ENCODE measurements at regions of chr7 and their contacts with region 1.

Region 1: DNA sequence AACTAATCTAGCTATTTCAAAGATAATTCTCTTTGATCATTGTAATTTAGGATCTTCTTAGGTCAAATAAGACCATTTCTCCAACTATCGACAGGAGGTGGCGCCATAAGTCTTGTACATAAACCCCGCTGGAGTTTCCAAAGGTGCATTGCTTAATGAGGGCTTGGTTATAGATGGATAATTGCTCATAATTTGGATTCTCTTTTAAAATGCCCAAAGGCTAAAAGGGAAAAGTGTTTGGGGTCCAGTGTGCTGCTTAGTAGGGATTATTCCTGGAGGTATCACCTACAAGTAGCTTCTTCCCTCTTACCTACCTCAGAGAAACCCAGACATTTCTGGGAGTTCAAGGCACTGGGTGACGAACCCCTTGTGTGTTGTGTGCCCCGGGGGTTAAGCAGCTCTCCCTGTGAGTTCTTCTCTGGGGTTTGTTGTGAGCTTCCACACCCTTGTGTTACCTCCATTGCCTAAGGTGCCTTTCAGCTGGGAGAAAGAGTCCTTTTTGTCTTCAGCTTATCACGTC is 75.2 kb downstream of the PAXIP1 start:
- DNase-seq: peak; percentile 87
- H3K4me3 ChIP-seq: peak overlapping the region; percentile 55
- H3K27ac ChIP-seq: peak overlapping the region; percentile 91
- H3K4me1 ChIP-seq: no peaks in the 10 kb centered on the region
- H3K27me3 ChIP-seq: no peaks in the 10 kb centered on the region
- CTCF ChIP-seq: peak; percentile 51

Region 2: DNA sequence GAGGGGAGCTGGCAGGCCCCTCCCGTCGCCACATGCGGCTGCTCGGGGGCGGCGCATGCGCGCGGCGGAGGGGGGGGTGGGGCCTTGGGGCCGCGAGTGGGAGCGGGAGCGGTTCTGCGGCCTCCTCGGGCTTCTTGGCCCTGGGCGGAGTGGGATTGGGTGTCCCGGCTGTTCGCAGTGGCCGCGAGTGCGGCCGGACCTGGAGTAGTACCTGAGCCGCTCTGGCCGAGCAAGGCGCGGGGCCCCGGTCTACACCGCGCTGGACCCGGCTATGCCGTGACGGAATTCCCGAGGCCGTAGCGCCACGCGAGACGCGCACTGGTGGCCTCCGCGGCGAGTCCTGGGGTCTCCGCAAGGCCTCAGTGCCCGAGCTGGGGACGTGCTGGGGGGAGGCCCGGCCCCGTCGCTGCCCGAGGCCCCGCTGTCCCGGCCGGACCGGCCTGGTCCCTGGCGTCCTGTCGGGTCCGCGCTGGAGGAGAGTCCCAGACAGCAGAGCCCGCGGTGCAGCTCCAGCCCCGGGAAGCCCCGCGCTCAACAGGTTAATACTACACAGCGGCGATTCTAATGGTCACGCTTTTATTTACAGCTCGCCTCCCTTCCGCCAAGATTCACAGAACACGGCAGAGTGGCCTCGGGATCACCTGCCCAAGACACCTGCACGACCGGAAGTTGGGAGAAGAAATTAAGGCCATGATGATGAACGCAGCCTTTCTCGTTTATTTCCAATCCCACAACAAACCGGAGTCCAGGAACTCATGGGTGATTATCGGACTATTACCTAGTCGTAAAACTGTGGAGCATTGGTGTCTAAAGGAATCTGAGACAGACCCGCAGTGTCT is 75.9 kb after region 1 on chr7:
- intact Hi-C with region 1: loop called (anchors 5 kb)
- DNase-seq: peak; percentile 76
- H3K4me3 ChIP-seq: peak overlapping the region; percentile 66
- H3K27ac ChIP-seq: peak overlapping the region; percentile 69
- H3K4me1 ChIP-seq: no peaks in the 10 kb centered on the region
- H3K27me3 ChIP-seq: no peaks in the 10 kb centered on the region
- CTCF ChIP-seq: no peak

Region 3: DNA sequence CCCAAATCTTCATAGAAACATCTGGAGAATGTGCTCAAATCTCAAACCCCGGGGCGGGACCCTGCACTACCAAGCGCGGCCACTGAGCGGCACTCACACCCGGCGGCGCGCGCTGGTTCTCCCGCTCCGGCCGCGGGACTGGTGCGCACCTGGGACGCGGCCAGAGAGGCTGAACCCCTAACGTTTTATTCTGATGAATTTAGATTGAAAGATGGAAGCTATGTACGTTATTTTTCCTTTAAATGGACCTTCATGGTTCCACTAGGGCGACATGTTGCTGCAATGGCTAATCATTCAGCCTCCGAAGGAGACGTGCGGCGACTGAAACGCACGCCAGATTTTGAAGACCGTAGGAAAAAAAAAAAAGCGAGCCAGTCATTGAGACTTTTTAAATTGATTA is 263.0 kb after region 1 on chr7:
- intact Hi-C with region 1: loop called (anchors 5 kb)
- DNase-seq: peak; percentile 51
- H3K4me3 ChIP-seq: no peak overlapping the region
- H3K27ac ChIP-seq: no peak overlapping the region
- H3K4me1 ChIP-seq: no peaks in the 10 kb centered on the region
- H3K27me3 ChIP-seq: no peaks in the 10 kb centered on the region
- CTCF ChIP-seq: peak; percentile 70

Region 4: DNA sequence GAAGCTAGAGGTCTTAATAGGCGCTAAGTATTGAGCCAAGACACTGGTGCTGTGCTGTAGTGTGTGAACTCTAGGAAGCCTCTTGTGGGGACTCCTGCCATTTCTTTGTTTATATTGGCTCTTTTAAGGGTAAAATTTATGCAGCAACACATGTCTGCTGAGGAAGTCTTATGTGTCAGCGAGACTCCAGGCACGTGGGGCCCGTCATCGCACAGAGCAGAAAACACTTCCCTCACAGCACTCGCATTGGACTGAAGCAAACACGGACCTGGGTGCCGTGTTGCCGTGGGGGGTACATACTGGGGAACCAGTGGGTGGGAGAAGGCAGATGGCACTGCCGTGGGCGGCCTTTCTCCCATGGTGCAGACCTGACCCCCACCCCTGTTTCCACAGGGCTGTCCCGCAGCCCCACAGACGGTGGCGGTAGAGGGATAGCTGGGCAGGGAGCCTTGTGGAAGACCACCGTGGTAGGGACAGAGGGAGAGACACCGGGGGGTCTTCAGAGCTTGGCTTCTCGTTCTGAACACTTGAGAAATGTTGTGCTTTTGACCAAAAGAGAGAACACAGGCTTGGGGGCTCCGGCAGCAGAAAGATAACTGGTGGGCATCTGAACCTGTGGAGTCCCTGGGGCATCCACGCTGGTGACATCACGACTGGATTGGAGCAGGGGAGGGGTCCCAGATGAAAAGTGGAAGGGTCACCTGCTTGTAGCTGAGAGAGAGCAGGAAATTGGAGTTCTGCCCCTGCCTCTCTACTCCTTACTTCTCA is 1169.3 kb after region 1 on chr7:
- intact Hi-C with region 1: no loop called
- DNase-seq: no peak
- H3K4me3 ChIP-seq: no peak overlapping the region
- H3K27ac ChIP-seq: no peak overlapping the region
- H3K4me1 ChIP-seq: no peaks in the 10 kb centered on the region
- H3K27me3 ChIP-seq: no peaks in the 10 kb centered on the region
- CTCF ChIP-seq: no peak